GM18951 (cell line): ENCODE measurements at regions of chr12 and their contacts with region 1.

Region 1: DNA sequence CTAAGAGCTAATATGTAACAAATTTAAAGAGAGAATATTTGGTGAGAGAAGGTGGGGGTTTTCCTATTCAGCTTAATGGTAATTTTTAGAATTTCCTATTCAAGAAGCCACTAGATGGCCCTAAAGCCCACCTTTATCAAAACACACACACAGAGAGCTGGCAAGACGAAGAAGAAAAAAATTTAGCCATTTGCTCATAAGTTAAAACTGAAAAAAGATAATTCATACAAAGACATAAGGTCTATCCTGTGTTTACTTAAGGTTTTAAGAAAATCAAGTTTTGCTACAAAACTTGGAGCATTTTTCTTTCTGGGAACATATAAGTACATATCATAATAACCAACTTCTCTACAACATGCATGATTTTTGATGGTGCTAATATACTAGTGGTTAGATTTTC is 46.8 kb upstream of the PCED1B start:
- POLR2A ChIP-seq: no peak

Region 2: DNA sequence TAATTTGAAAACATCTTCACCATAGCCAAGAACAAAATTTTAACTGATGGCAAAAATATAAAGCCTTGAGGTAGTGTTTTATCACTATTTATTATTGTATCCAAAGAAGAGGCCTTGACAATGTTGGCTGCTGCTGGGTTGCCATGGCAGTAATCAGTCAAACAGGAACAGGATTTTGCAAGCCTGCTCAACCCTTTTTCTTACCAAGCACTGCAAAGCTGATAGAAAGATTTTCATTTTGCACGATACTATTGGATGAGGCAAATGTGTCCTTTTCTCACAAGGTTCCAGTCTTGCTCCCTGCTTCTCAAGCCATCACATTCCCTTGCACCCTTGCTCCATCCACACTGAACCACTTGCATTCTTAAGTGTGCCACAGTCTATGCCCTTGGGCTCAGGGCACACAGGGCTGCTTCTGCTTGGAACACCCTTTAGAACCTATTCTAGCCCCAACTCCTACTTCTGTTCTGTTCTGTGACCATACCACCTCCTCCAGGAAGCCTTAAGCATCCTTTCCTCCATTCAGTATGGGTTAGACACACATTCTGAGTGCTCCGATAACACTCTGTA is 123.6 kb after region 1 on chr12:
- in situ Hi-C with region 1: no loop called
- POLR2A ChIP-seq: no peak

Region 3: DNA sequence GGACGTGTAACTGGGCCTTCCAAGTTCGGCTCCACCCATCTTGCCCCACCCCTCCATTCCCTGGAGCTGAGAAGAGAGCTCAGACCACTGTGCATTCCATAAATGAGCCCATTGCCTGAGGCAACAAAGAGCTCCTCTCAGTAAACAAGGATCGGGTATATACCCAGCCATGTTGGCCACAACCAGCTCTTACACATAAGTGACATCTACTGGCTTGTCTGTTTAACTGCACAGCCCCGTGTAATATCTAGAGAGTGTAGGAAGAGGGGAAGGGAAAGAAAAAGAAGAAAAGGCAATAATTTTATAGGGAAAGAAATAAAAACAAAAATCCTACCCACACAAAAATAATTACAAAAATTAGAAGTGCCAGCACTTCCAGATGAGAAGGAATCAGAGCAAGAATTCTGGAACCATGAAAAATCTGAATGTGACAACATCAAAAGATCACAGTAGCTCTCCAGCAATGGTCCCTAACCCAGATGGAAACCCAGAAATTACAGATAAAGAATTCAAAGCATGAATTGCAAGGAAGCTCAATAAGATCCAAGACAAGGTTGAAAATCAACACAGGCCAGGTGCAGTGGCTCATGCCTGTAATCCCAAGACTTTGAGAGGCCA is 365.1 kb after region 1 on chr12:
- in situ Hi-C with region 1: loop called (anchors 10 kb)
- POLR2A ChIP-seq: no peak